Endothelial cell of umbilical vein (primary cell): ENCODE measurements at regions of chr22 and their contacts with region 1.

Region 1: GRCh38 chr22:19495562-19496323 is 16.0 kb downstream of the CDC45 start:
- DNase-seq: peak; percentile 69
- H3K4me3 ChIP-seq: no peak overlapping the region
- H3K27ac ChIP-seq: no peak overlapping the region
- H3K4me1 ChIP-seq: no peaks in the 10 kb centered on the region
- H3K27me3 ChIP-seq: no peaks in the 10 kb centered on the region
- CTCF ChIP-seq: peak; percentile 24 to 37
- POLR2A ChIP-seq: no peak

Region 2: GRCh38 chr22:19253143-19253542 is 242.6 kb before region 1 on chr22:
- CTCF ChIA-PET with region 1: no interaction called
- POLR2A ChIA-PET with region 1: no interaction called
- dilution Hi-C with region 1: no loop called
- intact Hi-C with region 1: no loop called
- DNase-seq: no peak
- H3K4me3 ChIP-seq: no peak overlapping the region
- H3K27ac ChIP-seq: no peak overlapping the region
- H3K4me1 ChIP-seq: no peaks in the 10 kb centered on the region
- H3K27me3 ChIP-seq: no peaks in the 10 kb centered on the region
- CTCF ChIP-seq: no peak
- POLR2A ChIP-seq: no peak

Region 3: GRCh38 chr22:19463496-19464469 is 32.0 kb before region 1 on chr22:
- CTCF ChIA-PET with region 1: no interaction called
- POLR2A ChIA-PET with region 1: no interaction called
- dilution Hi-C with region 1: no loop called
- intact Hi-C with region 1: no loop called
- DNase-seq: no peak
- H3K4me3 ChIP-seq: no peak overlapping the region
- H3K27ac ChIP-seq: no peak overlapping the region
- H3K4me1 ChIP-seq: no peaks in the 10 kb centered on the region
- H3K27me3 ChIP-seq: no peaks in the 10 kb centered on the region
- CTCF ChIP-seq: no peak
- POLR2A ChIP-seq: no peak

Region 4: GRCh38 chr22:19523240-19524169 is 27.8 kb after region 1 on chr22:
- CTCF ChIA-PET with region 1: interaction called, 17 read pairs
- POLR2A ChIA-PET with region 1: no interaction called
- dilution Hi-C with region 1: no loop called
- intact Hi-C with region 1: no loop called
- DNase-seq: peak; percentile 60
- H3K4me3 ChIP-seq: peak overlapping the region; percentile 53 to 75 (median 61)
- H3K27ac ChIP-seq: peak overlapping the region; percentile 55
- H3K4me1 ChIP-seq: peaks cover 44% of the 10 kb centered on the region
- H3K27me3 ChIP-seq: no peaks in the 10 kb centered on the region
- CTCF ChIP-seq: no peak
- POLR2A ChIP-seq: peak; percentile 48

Region 5: GRCh38 chr22:19554834-19555404 is 59.2 kb after region 1 on chr22:
- CTCF ChIA-PET with region 1: interaction called, 12 read pairs
- POLR2A ChIA-PET with region 1: no interaction called
- dilution Hi-C with region 1: no loop called
- intact Hi-C with region 1: no loop called
- DNase-seq: peak; percentile 73
- H3K4me3 ChIP-seq: no peak overlapping the region
- H3K27ac ChIP-seq: no peak overlapping the region
- H3K4me1 ChIP-seq: peaks cover 7% of the 10 kb centered on the region
- H3K27me3 ChIP-seq: no peaks in the 10 kb centered on the region
- CTCF ChIP-seq: peak; percentile 13 to 34
- POLR2A ChIP-seq: no peak

Region 6: DNA sequence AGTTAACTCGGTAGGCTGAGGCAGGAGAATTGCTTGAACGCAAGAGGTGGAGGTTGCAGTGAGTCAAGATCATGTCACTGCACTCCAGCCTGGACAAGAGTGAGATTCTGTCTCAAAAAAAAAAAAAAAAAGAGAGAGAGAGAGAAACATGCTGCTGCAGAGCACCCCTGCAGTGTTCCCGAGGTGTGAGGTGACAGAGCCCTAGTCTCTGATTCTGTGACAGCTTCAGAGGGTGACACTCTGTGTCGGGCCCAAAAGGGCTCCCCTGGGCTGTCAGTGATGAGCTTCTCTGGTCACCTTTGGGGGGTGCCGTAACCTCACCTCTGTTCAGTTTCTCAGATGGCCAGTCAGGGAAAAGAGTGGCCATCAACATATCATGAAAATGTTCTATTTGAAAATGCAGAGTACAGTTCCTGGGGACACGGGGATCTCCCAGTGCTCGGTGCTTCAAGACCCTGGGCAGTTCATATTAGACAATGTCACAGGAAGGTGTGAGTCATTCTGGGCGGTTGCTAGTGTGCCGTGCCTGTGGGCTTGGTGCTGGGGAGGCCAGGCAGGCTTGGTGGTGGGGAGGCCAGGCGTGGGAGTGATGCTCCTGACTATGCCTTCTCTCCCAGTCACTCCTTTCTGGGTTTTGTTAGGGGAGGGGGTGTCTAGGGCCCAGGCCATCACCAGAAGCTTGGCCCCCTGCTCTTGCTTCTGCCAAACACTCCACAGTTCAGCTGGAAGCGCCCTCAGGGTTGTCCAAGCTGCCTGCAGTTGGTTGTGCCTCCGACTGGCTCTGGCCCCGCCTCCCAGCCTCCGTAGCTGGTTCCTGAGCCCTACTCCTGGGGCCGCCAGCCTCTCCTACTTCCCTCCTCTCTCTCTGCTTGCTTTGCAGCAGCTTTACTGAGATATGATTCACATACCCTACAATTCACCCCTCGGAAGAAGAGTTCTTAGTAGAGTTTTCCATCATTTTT is 81.0 kb after region 1 on chr22:
- CTCF ChIA-PET with region 1: interaction called, 17 read pairs
- POLR2A ChIA-PET with region 1: no interaction called
- dilution Hi-C with region 1: no loop called
- intact Hi-C with region 1: no loop called
- DNase-seq: peak; percentile 90
- H3K4me3 ChIP-seq: no peak overlapping the region
- H3K27ac ChIP-seq: peak overlapping the region; percentile 75
- H3K4me1 ChIP-seq: peaks cover 47% of the 10 kb centered on the region
- H3K27me3 ChIP-seq: no peaks in the 10 kb centered on the region
- CTCF ChIP-seq: no peak
- POLR2A ChIP-seq: peak; percentile 70

Region 7: GRCh38 chr22:19596680-19597398 is 101.1 kb after region 1 on chr22:
- CTCF ChIA-PET with region 1: interaction called, 12 read pairs
- POLR2A ChIA-PET with region 1: no interaction called
- dilution Hi-C with region 1: no loop called
- intact Hi-C with region 1: no loop called
- DNase-seq: no peak
- H3K4me3 ChIP-seq: no peak overlapping the region
- H3K27ac ChIP-seq: no peak overlapping the region
- H3K4me1 ChIP-seq: peaks cover 11% of the 10 kb centered on the region
- H3K27me3 ChIP-seq: no peaks in the 10 kb centered on the region
- CTCF ChIP-seq: no peak
- POLR2A ChIP-seq: no peak

Region 8: GRCh38 chr22:19607192-19608002 is 111.7 kb after region 1 on chr22:
- CTCF ChIA-PET with region 1: interaction called, 12 read pairs
- POLR2A ChIA-PET with region 1: no interaction called
- dilution Hi-C with region 1: no loop called
- intact Hi-C with region 1: no loop called
- DNase-seq: peak; percentile 74
- H3K4me3 ChIP-seq: no peak overlapping the region
- H3K27ac ChIP-seq: no peak overlapping the region
- H3K4me1 ChIP-seq: peaks cover 2% of the 10 kb centered on the region
- H3K27me3 ChIP-seq: no peaks in the 10 kb centered on the region
- CTCF ChIP-seq: no peak
- POLR2A ChIP-seq: no peak

Region 9: GRCh38 chr22:19619144-19620009 is 123.6 kb after region 1 on chr22:
- CTCF ChIA-PET with region 1: interaction called, 15 read pairs
- POLR2A ChIA-PET with region 1: no interaction called
- dilution Hi-C with region 1: no loop called
- intact Hi-C with region 1: no loop called
- DNase-seq: peak; percentile 33
- H3K4me3 ChIP-seq: no peak overlapping the region
- H3K27ac ChIP-seq: no peak overlapping the region
- H3K4me1 ChIP-seq: peaks cover 20% of the 10 kb centered on the region
- H3K27me3 ChIP-seq: peaks cover 0 to 3% of the 10 kb centered on the region in 2 experiments
- CTCF ChIP-seq: no peak
- POLR2A ChIP-seq: no peak

Region 10: GRCh38 chr22:19672054-19672776 is 176.5 kb after region 1 on chr22:
- CTCF ChIA-PET with region 1: no interaction called
- POLR2A ChIA-PET with region 1: no interaction called
- dilution Hi-C with region 1: no loop called
- intact Hi-C with region 1: no loop called
- DNase-seq: no peak
- H3K4me3 ChIP-seq: no peak overlapping the region
- H3K27ac ChIP-seq: no peak overlapping the region
- H3K4me1 ChIP-seq: no peaks in the 10 kb centered on the region
- H3K27me3 ChIP-seq: peaks cover 2 to 12% of the 10 kb centered on the region in 2 experiments
- CTCF ChIP-seq: no peak
- POLR2A ChIP-seq: no peak